ENCODE measurements at regions of chr17 and their contacts with region 1.

Region 1: GRCh38 chr17:56819431-56820145 is 14.1 kb downstream of the C17orf67 start:
- DNase-seq: peak; percentile 83
- ATAC-seq: peak; percentile 97
- H3K4me3 Mint-ChIP-seq: no peak overlapping the region
- H3K27ac Mint-ChIP-seq: no peak overlapping the region
- H3K4me1 Mint-ChIP-seq: peaks cover 15% of the 10 kb centered on the region
- H3K27me3 Mint-ChIP-seq: no peaks in the 10 kb centered on the region
- CTCF ChIP-seq: peak; percentile 93

Region 2: GRCh38 chr17:56756536-56756935 is 63.1 kb before region 1 on chr17:
- CTCF ChIA-PET with region 1: no interaction called
- POLR2A ChIA-PET with region 1: no interaction called
- intact Hi-C with region 1: no loop called
- DNase-seq: peak; percentile 8
- ATAC-seq: peak; percentile 50
- H3K4me3 Mint-ChIP-seq: no peak overlapping the region
- H3K27ac Mint-ChIP-seq: no peak overlapping the region
- H3K4me1 Mint-ChIP-seq: peaks cover 13% of the 10 kb centered on the region
- H3K27me3 Mint-ChIP-seq: no peaks in the 10 kb centered on the region
- CTCF ChIP-seq: no peak

Region 3: DNA sequence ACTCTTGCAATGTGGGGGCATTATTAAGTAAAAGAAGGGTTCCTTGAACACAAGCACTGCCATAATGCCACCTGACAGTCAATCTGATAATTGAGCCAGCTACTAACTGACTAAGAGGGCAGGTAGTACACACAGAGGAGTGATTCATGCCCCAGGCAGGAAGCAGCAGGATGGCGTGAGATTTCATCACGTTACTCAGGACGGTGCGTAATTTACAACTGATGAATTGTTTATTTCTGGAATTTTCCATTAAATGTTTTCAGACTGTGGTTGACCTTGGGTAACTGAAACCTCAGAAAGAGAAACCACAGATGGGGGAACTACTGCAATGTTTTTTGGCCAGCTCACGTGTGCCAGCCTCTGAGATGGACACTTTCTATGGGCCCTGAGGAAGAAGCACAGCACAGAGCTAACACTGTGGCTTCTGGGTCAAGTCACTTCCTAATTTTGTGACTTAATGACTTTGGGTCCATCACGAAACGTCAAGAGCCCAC is 32.6 kb before region 1 on chr17:
- CTCF ChIA-PET with region 1: interaction called, 20 read pairs
- POLR2A ChIA-PET with region 1: no interaction called
- intact Hi-C with region 1: no loop called
- DNase-seq: peak; percentile 87
- ATAC-seq: peak; percentile 98
- H3K4me3 Mint-ChIP-seq: peak overlapping the region; percentile 44
- H3K27ac Mint-ChIP-seq: peak overlapping the region; percentile 95
- H3K4me1 Mint-ChIP-seq: peaks cover 34% of the 10 kb centered on the region
- H3K27me3 Mint-ChIP-seq: no peaks in the 10 kb centered on the region
- CTCF ChIP-seq: no peak

Region 4: GRCh38 chr17:56842577-56842976 is 23.0 kb after region 1 on chr17:
- CTCF ChIA-PET with region 1: interaction called, 15 read pairs
- POLR2A ChIA-PET with region 1: no interaction called
- intact Hi-C with region 1: no loop called
- DNase-seq: no peak
- ATAC-seq: no peak
- H3K4me3 Mint-ChIP-seq: no peak overlapping the region
- H3K27ac Mint-ChIP-seq: no peak overlapping the region
- H3K4me1 Mint-ChIP-seq: peaks cover 27% of the 10 kb centered on the region
- H3K27me3 Mint-ChIP-seq: no peaks in the 10 kb centered on the region
- CTCF ChIP-seq: no peak

Region 5: DNA sequence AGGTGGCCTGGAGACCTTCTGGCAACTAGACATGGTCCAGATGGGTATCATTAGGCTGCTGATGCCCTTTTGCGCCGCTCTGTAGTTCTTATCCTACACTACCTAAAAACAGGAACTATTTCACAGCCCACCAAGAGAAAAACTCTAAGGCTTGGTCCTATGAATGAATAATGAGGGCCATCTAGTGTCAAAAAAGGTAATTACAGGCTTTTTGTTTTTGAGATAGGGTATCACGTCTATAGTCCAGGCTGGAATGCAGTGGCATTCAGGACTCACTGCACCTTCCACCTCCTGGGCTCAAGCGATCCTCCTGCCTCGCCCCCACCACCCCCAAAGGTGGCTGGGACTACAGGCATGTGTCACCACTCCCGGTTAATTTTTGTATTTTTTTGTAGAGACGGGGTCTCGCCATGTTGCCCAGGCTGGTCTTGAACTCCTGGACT is 120.3 kb after region 1 on chr17:
- CTCF ChIA-PET with region 1: interaction called, 17 read pairs
- POLR2A ChIA-PET with region 1: no interaction called
- intact Hi-C with region 1: loop called (anchors 5 kb)
- DNase-seq: no peak
- ATAC-seq: peak; percentile 61
- H3K4me3 Mint-ChIP-seq: no peak overlapping the region
- H3K27ac Mint-ChIP-seq: no peak overlapping the region
- H3K4me1 Mint-ChIP-seq: peaks cover 16% of the 10 kb centered on the region
- H3K27me3 Mint-ChIP-seq: no peaks in the 10 kb centered on the region
- CTCF ChIP-seq: peak; percentile 89

Measured in activated CD8-positive, alpha-beta T cell treated with anti-CD3 and anti-CD28 coated beads for 36 hours (primary cell).